ENCODE measurements at regions of chr19 and their contacts with region 1.

Region 1: GRCh38 chr19:14517840-14518505 is at the start of gene DNAJB1:
- DNase-seq: peak; percentile 57 to 79
- H3K4me3 ChIP-seq: peak within 1 kb of the TSS; percentile 100
- H3K4me3 Mint-ChIP-seq: peak within 1 kb of the TSS; percentile 88
- H3K27ac Mint-ChIP-seq: peak within 1 kb of the TSS; percentile 86
- H3K4me1 ChIP-seq: peaks cover 25% of the 10 kb centered on the region
- H3K4me1 Mint-ChIP-seq: peaks cover 12% of the 10 kb centered on the region
- H3K27me3 ChIP-seq: no peaks in the 10 kb centered on the region
- H3K27me3 Mint-ChIP-seq: no peaks in the 10 kb centered on the region
- CTCF ChIP-seq: no peak
- total RNA-seq, gene DNAJB1: 79.5 and 80.2 TPM in 2 replicates

Region 2: GRCh38 chr19:14167576-14168138 is 350.3 kb before region 1 on chr19:
- CTCF ChIA-PET with region 1: no interaction called
- POLR2A ChIA-PET with region 1: no interaction called
- intact Hi-C with region 1: no loop called
- DNase-seq: no peak
- H3K4me3 ChIP-seq: no peak overlapping the region
- H3K4me3 Mint-ChIP-seq: no peak overlapping the region
- H3K27ac Mint-ChIP-seq: no peak overlapping the region
- H3K4me1 ChIP-seq: no peaks in the 10 kb centered on the region
- H3K4me1 Mint-ChIP-seq: no peaks in the 10 kb centered on the region
- H3K27me3 ChIP-seq: no peaks in the 10 kb centered on the region
- H3K27me3 Mint-ChIP-seq: no peaks in the 10 kb centered on the region
- CTCF ChIP-seq: no peak

Region 3: DNA sequence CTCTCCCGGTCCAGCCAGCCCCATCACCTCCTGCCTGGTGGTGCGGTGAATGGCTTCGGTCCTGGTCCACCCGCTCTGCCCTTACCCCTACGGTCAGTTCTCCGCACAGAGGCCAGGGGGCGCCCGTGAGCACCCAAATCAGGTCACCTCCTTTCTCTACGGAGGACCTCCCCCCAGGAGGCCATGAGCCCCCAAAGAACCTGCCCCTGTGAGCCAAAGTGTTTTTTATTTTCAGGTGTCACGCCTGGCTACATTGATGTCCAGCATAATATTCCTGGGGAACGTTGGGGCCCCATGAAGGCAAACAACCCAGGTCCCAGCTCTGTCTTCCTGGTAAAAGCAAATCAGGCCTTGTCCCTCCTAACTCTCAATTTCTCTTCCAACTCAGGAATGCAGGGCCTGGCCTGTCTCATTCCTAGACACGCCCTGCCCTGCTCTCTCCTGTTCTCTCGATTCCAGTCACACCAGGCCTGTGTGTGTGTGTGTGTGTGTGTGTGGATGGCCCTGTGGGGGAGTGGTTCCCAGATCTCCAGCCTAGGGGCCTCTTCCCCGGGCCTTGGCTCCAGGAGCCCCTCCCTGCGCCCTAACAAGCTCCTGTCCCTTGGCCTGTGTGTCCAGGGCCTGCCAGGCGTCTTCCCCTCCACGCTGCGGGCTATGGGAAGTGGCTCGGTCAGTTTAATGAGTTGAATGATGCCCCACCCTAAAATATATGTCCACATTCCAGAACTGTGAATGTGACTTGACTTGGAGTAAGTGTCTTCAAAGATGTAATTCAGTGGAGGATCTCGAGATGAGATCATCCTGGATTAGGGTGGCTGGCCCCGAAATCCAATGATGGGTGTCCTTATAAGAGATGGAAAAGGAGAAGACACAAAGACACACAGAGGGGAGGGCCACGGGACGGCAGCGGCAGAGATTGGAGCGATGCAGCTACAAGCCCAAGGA is 12.2 kb before region 1 on chr19:
- CTCF ChIA-PET with region 1: interaction called, 11 read pairs
- POLR2A ChIA-PET with region 1: interaction called, 11 read pairs
- intact Hi-C with region 1: loop called (anchors 2 kb)
- DNase-seq: peak; percentile 89 to 93
- H3K4me3 ChIP-seq: no peak overlapping the region
- H3K4me3 Mint-ChIP-seq: peak overlapping the region; percentile 58
- H3K27ac Mint-ChIP-seq: peak overlapping the region; percentile 94
- H3K4me1 ChIP-seq: peaks cover 54% of the 10 kb centered on the region
- H3K4me1 Mint-ChIP-seq: peaks cover 50% of the 10 kb centered on the region
- H3K27me3 ChIP-seq: no peaks in the 10 kb centered on the region
- H3K27me3 Mint-ChIP-seq: no peaks in the 10 kb centered on the region
- CTCF ChIP-seq: peak; percentile 88 to 92

Region 4: DNA sequence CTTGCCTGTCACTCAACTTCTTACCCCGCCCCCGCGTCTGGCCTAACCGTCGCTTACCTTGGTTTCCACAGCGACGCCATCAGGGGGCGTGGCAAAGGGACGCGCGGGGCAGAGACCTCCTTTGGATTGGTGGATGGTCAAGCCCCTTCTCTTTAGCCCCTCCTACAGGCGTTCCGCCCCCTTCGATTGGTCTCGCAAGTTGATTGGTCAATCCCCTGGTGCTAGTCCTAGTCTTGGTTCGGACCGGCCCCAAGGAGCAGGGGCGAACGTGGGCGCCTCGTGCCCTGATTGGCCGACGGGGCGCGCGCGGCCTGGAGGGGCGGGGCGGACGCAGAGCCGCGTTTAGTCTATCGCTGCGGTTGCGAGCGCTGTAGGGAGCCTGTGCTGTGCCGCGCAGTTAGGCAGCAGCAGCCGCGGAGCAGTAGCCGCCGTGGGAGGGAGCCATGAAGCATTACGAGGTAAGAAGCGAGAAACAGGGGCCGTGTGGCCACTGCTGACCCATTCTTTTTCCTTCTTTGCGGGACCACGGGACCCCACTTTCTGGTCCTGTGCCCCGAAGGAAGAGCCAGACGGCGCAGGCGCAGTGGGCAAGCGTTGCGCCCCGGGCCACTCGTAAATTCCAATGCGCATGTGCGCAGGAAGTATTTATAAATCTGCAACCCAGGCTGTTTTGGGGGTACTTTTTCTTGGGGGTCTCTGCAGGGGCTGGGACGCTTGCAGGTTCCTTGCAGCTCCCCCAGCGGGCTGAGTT is 11.5 kb after region 1 on chr19 and contains the start of gene TECR:
- CTCF ChIA-PET with region 1: no interaction called
- POLR2A ChIA-PET with region 1: interaction called, 13 read pairs
- intact Hi-C with region 1: loop called (anchors 1 kb)
- DNase-seq: peak; percentile 100
- H3K4me3 ChIP-seq: peak within 1 kb of the TSS; percentile 91
- H3K4me3 Mint-ChIP-seq: peak within 1 kb of the TSS; percentile 97
- H3K27ac Mint-ChIP-seq: peak within 1 kb of the TSS; percentile 93
- H3K4me1 ChIP-seq: peaks cover 10% of the 10 kb centered on the region; the same call in 1 of the 2 replicates
- H3K4me1 Mint-ChIP-seq: no peaks in the 10 kb centered on the region
- H3K27me3 ChIP-seq: no peaks in the 10 kb centered on the region
- H3K27me3 Mint-ChIP-seq: no peaks in the 10 kb centered on the region
- CTCF ChIP-seq: no peak
- total RNA-seq, gene TECR: 294 and 300 TPM in 2 replicates

Region 5: GRCh38 chr19:14536926-14537692 is 19.1 kb after region 1 on chr19:
- CTCF ChIA-PET with region 1: interaction called, 3 read pairs
- POLR2A ChIA-PET with region 1: interaction called, 11 read pairs
- intact Hi-C with region 1: no loop called
- DNase-seq: peak; percentile 89 to 96
- H3K4me3 ChIP-seq: no peak overlapping the region
- H3K4me3 Mint-ChIP-seq: peak overlapping the region; percentile 64
- H3K27ac Mint-ChIP-seq: peak overlapping the region; percentile 70
- H3K4me1 ChIP-seq: peaks cover 10% of the 10 kb centered on the region
- H3K4me1 Mint-ChIP-seq: no peaks in the 10 kb centered on the region
- H3K27me3 ChIP-seq: no peaks in the 10 kb centered on the region
- H3K27me3 Mint-ChIP-seq: no peaks in the 10 kb centered on the region
- CTCF ChIP-seq: no peak

Region 6: DNA sequence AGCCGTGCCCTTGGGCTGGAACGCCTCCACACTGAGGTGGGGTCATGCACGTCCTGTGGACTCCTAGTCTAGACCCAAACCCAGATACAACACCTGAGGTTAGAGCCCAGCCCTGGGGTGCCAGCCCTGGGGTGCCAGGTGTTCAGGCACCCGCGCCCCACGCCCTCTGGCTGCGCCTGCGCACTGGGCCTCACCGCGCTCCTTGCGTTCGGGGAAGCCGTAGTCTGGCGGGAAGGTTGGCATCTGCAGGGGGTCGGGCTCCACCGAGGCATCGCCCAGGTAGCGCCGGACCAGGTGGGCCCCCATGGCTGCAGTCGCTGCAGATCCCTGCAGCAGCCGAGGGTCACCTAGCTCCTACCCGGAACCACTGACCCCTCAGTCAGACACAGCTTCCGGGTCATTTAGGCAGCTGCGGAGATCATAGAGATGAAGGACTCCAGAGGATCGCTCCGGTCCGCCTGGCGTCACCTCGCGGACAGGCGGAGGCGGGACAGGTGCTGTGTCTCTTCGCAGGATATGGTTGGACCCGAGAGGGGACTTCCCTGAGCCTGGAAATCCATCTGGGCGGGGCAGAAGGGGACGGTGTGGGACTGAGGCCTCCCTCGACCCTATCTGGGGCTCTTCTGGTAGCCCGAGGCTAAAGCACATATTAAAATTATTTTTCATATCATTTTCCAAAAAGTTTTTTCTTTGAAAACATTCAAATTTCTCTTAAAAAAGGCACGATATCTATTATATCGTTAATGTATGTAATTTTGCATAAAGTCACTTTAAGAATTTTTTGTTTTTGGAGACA is 53.9 kb after region 1 on chr19 and contains the start of gene NDUFB7:
- CTCF ChIA-PET with region 1: no interaction called
- POLR2A ChIA-PET with region 1: interaction called, 6 read pairs
- intact Hi-C with region 1: loop called (anchors 1 kb)
- DNase-seq: peak; percentile 93
- H3K4me3 ChIP-seq: peak within 1 kb of the TSS; percentile 92
- H3K4me3 Mint-ChIP-seq: peak within 1 kb of the TSS; percentile 88
- H3K27ac Mint-ChIP-seq: peak within 1 kb of the TSS; percentile 92
- H3K4me1 ChIP-seq: no peaks in the 10 kb centered on the region
- H3K4me1 Mint-ChIP-seq: peaks cover 9% of the 10 kb centered on the region
- H3K27me3 ChIP-seq: no peaks in the 10 kb centered on the region
- H3K27me3 Mint-ChIP-seq: no peaks in the 10 kb centered on the region
- CTCF ChIP-seq: peak; percentile 39 to 87
- total RNA-seq, gene NDUFB7: 158 and 173 TPM in 2 replicates

Measured in Caco-2 (cell line).